Aorta (tissue), 5 donors: ENCODE measurements at regions of chr6 and their contacts with region 1.

Region 1: DNA sequence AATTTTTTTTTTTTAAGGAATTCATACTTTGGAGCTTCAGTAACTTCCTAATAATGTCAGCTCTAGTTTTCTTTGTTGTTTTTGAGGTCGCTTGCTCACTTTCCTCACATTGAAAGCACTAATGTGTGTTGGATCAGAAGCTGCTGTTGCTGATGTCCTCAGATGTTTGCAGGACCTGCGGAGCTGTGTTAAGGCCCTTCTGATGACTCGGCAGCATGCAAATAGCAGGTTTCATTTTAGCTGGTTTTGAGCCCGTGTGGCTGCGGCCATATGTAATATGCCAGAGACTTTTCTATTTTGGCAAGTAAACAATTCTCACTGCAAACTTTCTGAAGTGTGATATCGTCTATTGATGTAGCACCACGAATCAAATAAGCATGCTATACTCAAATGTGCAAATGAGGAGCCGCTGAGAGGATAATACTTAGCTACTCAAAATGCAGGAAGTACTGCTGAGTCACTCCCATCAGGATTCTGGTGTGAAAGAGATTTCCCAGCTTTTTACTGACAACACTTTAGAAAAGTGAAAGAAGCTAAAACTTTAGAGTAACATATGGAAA is 187.8 kb downstream of the SASH1 start:
- DNase-seq: no peak
- ATAC-seq: peak; percentile 44
- H3K4me3 ChIP-seq: peak overlapping the region in 1 of 2 donors; percentile 54
- H3K27ac ChIP-seq: peak overlapping the region; percentile 16 to 80
- H3K4me1 ChIP-seq: peaks cover 0 to 6% of the 10 kb centered on the region in 2 donors
- H3K27me3 ChIP-seq: no peaks in the 10 kb centered on the region

Region 2: GRCh38 chr6:148342357-148343046 is 188.0 kb before region 1 on chr6 and contains the start of gene SASH1:
- intact Hi-C with region 1: loop called in 1 of 2 experiments (anchors 10 kb)
- DNase-seq: peak; percentile 83 to 85
- ATAC-seq: peak; percentile 83
- H3K4me3 ChIP-seq: peak within 1 kb of the TSS; percentile 99 to 100
- H3K27ac ChIP-seq: peak within 1 kb of the TSS; percentile 62 to 98
- H3K4me1 ChIP-seq: peaks cover 5 to 8% of the 10 kb centered on the region in 2 donors
- H3K27me3 ChIP-seq: no peaks in the 10 kb centered on the region
- total RNA-seq, gene SASH1: 89.7 to 120 TPM

Region 3: GRCh38 chr6:148455225-148455624 is 75.2 kb before region 1 on chr6:
- intact Hi-C with region 1: no loop called
- DNase-seq: no peak
- ATAC-seq: no peak
- H3K4me3 ChIP-seq: no peak overlapping the region
- H3K27ac ChIP-seq: no peak overlapping the region
- H3K4me1 ChIP-seq: no peaks in the 10 kb centered on the region
- H3K27me3 ChIP-seq: no peaks in the 10 kb centered on the region

Region 4: GRCh38 chr6:149728499-149729234 is 1198.2 kb after region 1 on chr6:
- intact Hi-C with region 1: no loop called
- DNase-seq: no peak
- ATAC-seq: no peak
- H3K4me3 ChIP-seq: no peak overlapping the region
- H3K27ac ChIP-seq: no peak overlapping the region
- H3K4me1 ChIP-seq: no peaks in the 10 kb centered on the region
- H3K27me3 ChIP-seq: no peaks in the 10 kb centered on the region